ENCODE measurements at regions of chr22 and their contacts with region 1.

Region 1: DNA sequence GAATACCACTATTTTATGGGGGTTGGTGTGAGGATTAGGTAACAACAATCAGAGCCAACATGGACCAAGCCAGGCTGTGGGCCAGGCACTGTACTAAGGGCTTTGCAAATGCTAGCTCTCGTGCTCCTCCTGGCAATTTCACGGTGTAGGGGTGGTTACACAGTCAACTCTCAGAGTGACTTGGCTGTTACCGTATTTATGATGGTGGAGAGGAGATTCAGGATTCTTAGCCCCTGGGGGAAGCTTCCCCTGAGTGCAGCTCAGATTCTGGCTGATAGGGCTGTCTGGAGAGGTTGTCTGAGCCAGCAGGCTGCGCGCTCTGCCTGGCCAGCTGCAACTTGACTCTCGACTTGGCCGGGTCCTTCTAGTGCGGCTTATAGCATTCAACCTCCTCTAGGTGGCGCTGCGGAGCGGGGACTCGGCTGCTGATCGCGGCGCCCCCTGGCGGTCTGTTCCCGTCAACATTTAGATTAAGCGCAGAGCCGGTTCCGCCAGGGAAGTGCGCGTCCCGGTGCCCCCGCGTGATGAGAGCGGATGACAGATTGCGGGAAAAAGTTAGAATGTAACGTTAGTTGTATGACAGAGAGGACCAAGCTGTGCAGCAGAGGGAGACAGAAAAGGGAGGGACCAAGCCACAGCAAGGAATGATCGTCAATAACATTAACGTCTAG is 4.5 kb upstream of the NCF4 start:
- DNase-seq: peak; percentile 85 to 92
- H3K4me3 ChIP-seq: no peak overlapping the region
- H3K27ac ChIP-seq: no peak overlapping the region
- H3K4me1 ChIP-seq: no peaks in the 10 kb centered on the region
- H3K27me3 ChIP-seq: no peaks in the 10 kb centered on the region
- CTCF ChIP-seq: peak; percentile 99 to 100 (median 100)
- POLR2A ChIP-seq: no peak

Region 2: GRCh38 chr22:36546092-36546804 is 310.0 kb before region 1 on chr22:
- intact Hi-C with region 1: loop called (anchors 5 kb)
- DNase-seq: peak; percentile 26 to 34
- H3K4me3 ChIP-seq: no peak overlapping the region
- H3K27ac ChIP-seq: no peak overlapping the region
- H3K4me1 ChIP-seq: no peaks in the 10 kb centered on the region
- H3K27me3 ChIP-seq: no peaks in the 10 kb centered on the region
- CTCF ChIP-seq: peak in 5 of 6 experiments; percentile 15 to 51 (median 26)
- POLR2A ChIP-seq: no peak

Region 3: GRCh38 chr22:36781656-36782627 is 74.3 kb before region 1 on chr22:
- intact Hi-C with region 1: loop called (anchors 2 kb)
- DNase-seq: peak; percentile 70 to 77
- H3K4me3 ChIP-seq: no peak overlapping the region
- H3K27ac ChIP-seq: no peak overlapping the region
- H3K4me1 ChIP-seq: no peaks in the 10 kb centered on the region
- H3K27me3 ChIP-seq: no peaks in the 10 kb centered on the region
- CTCF ChIP-seq: peak; percentile 75 to 92 (median 86)
- POLR2A ChIP-seq: no peak

Region 4: GRCh38 chr22:36977947-36978660 is 121.8 kb after region 1 on chr22:
- intact Hi-C with region 1: loop called (anchors 5 kb)
- DNase-seq: peak; percentile 89 to 91
- H3K4me3 ChIP-seq: peak overlapping the region in 1 of 3 donors; percentile 2
- H3K27ac ChIP-seq: no peak overlapping the region
- H3K4me1 ChIP-seq: peaks cover 0 to 7% of the 10 kb centered on the region in 2 donors
- H3K27me3 ChIP-seq: no peaks in the 10 kb centered on the region
- CTCF ChIP-seq: peak; percentile 68 to 93 (median 88)
- POLR2A ChIP-seq: peak in 1 of 2 donors; percentile 29

Region 5: DNA sequence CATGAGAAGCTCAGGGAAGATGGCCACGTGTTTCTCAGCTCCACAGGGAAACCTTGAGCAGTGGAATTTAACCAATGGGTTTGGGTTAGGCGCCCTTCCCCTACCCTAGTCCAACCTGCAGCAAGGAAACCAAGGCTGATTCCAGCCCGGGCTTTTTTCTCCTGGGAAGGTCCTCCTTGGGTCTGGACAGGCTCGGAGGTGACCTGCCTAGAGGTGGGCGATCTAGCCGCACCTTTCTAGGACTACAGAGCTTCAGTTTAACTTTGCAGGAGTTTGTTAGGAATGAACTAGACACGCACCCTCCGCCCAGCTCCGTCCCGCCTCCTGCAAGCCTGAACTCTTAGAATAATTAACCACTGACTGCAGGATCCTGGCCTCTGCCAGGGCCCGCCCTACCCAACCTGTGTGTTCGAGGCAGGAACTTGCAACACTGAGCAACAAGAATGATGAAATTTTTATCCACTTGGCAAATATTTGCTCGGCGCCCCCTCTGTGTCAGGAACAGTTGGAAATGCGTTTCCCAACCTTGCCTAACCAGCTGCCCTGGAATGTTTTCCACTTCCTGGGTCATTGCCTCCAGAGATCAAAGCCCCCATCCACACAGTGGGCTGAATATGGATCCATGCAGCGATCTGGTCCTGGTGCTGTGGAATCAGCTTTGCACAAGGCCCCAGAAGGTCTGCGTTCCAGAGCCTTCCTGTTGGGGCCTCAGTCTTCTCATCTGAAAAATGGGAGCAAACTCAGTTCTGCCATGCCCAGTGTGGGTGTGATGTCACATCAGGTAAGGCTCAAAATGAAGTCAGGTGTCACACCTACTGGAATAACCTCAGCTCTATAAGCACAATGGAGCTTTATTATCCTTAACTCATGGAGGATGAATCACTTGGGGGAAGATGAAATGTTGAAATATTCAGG is 176.5 kb after region 1 on chr22:
- intact Hi-C with region 1: loop called (anchors 10 kb)
- DNase-seq: peak; percentile 45 to 60
- H3K4me3 ChIP-seq: no peak overlapping the region
- H3K27ac ChIP-seq: no peak overlapping the region
- H3K4me1 ChIP-seq: peaks cover 15 to 16% of the 10 kb centered on the region in 2 donors
- H3K27me3 ChIP-seq: no peaks in the 10 kb centered on the region
- CTCF ChIP-seq: no peak
- POLR2A ChIP-seq: no peak